HepG2 (cell line): ENCODE measurements at regions of chr17 and their contacts with region 1.

Region 1: DNA sequence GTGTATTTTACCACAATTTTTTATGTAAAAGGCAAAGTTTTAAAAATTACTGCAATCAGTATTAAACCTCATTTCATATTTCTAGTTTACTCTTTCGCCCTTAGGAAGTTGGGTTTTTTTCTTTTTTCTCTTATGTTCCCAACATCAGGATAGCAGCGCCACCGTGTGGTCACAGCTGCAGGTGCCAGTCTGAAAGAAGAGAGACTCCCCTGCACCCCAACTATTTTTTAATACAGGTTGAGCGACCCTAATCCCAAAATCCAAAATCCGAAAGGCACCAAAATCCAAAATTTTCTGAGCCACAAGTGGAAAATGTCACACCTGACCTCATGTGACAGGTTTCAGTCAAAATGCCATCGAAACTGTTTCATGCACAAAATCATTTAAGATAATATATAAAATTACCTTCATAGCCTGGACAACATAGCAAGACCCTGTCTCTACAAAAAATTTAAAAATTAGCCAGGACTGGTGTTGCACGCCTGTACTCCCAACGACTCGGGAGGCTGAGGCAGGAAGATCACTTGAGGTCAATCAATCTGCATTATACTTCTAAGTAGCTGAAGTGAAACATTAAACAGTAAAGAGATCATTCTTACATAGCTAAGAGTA is 21.8 kb upstream of the ASGR2 start:
- DNase-seq: peak; percentile 63
- ATAC-seq: no peak
- H3K4me3 ChIP-seq: peak overlapping the region; percentile 24 to 50 (median 30)
- H3K27ac ChIP-seq: peak overlapping the region; percentile 66
- H3K4me1 ChIP-seq: peaks cover 70% of the 10 kb centered on the region
- H3K27me3 ChIP-seq: no peaks in the 10 kb centered on the region
- CTCF ChIP-seq: peak; percentile 81
- EP300 ChIP-seq: no peak
- POLR2A ChIP-seq: no peak
- RAD21 ChIP-seq: peak; percentile 89

Region 2: GRCh38 chr17:6936370-6937028 is 199.9 kb before region 1 on chr17:
- CTCF ChIA-PET with region 1: no interaction called
- POLR2A ChIA-PET with region 1: no interaction called
- in situ Hi-C with region 1: no loop called
- intact Hi-C with region 1: no loop called
- DNase-seq: no peak
- ATAC-seq: no peak
- H3K4me3 ChIP-seq: no peak overlapping the region
- H3K27ac ChIP-seq: no peak overlapping the region
- H3K4me1 ChIP-seq: no peaks in the 10 kb centered on the region
- H3K27me3 ChIP-seq: no peaks in the 10 kb centered on the region
- CTCF ChIP-seq: no peak
- EP300 ChIP-seq: no peak
- POLR2A ChIP-seq: no peak
- RAD21 ChIP-seq: no peak

Region 3: GRCh38 chr17:6969323-6969726 is 167.0 kb before region 1 on chr17:
- CTCF ChIA-PET with region 1: no interaction called
- POLR2A ChIA-PET with region 1: no interaction called
- in situ Hi-C with region 1: no loop called
- intact Hi-C with region 1: no loop called
- DNase-seq: peak; percentile 12
- ATAC-seq: no peak
- H3K4me3 ChIP-seq: no peak overlapping the region
- H3K27ac ChIP-seq: no peak overlapping the region
- H3K4me1 ChIP-seq: peaks cover 8% of the 10 kb centered on the region
- H3K27me3 ChIP-seq: no peaks in the 10 kb centered on the region
- CTCF ChIP-seq: no peak
- EP300 ChIP-seq: no peak
- POLR2A ChIP-seq: no peak
- RAD21 ChIP-seq: no peak

Region 4: DNA sequence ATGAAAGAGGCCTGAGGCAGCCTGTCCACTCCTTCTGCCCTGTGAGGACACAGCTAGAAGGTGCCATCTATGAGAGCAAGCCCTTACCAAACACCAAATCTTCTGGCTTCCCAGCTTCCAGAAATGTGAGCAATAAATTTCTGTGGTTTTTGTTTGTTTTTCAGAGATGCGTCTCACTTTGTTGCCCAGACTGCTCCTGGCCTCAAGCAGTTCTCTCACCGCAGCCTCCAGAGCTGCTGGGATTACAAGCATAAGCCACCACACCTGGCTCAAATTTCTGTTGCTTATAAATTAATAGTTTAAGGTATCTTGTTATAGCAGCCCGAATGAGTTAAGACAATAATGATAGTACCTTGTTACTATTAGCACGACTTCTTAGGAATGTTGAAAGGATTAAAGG is 80.0 kb before region 1 on chr17:
- CTCF ChIA-PET with region 1: interaction called, 64 read pairs
- POLR2A ChIA-PET with region 1: interaction called, 9 read pairs
- in situ Hi-C with region 1: loop called (anchors 5 kb)
- intact Hi-C with region 1: loop called (anchors 1 kb)
- DNase-seq: no peak
- ATAC-seq: no peak
- H3K4me3 ChIP-seq: no peak overlapping the region
- H3K27ac ChIP-seq: no peak overlapping the region
- H3K4me1 ChIP-seq: peaks cover 27% of the 10 kb centered on the region
- H3K27me3 ChIP-seq: no peaks in the 10 kb centered on the region; a peak in 2 of 5 replicates
- CTCF ChIP-seq: no peak
- EP300 ChIP-seq: no peak
- POLR2A ChIP-seq: no peak
- RAD21 ChIP-seq: no peak

Region 5: GRCh38 chr17:7081341-7082062 is 54.9 kb before region 1 on chr17:
- CTCF ChIA-PET with region 1: no interaction called
- POLR2A ChIA-PET with region 1: interaction called, 4 read pairs
- in situ Hi-C with region 1: no loop called
- intact Hi-C with region 1: loop called (anchors 5 kb)
- DNase-seq: no peak
- ATAC-seq: peak; percentile 27; the same call in 1 of the 3 replicates
- H3K4me3 ChIP-seq: no peak overlapping the region
- H3K27ac ChIP-seq: no peak overlapping the region
- H3K4me1 ChIP-seq: peaks cover 14% of the 10 kb centered on the region
- H3K27me3 ChIP-seq: peaks cover 0 to 2% of the 10 kb centered on the region in 2 experiments; a peak in 3 of 5 replicates
- CTCF ChIP-seq: no peak
- EP300 ChIP-seq: no peak
- POLR2A ChIP-seq: no peak
- RAD21 ChIP-seq: no peak

Region 6: GRCh38 chr17:7167832-7168231 is 31.5 kb after region 1 on chr17:
- CTCF ChIA-PET with region 1: no interaction called
- POLR2A ChIA-PET with region 1: interaction called, 13 read pairs
- in situ Hi-C with region 1: no loop called
- intact Hi-C with region 1: no loop called
- DNase-seq: peak; percentile 56
- ATAC-seq: peak; percentile 16; the same call in 1 of the 3 replicates
- H3K4me3 ChIP-seq: no peak overlapping the region
- H3K27ac ChIP-seq: peak overlapping the region; percentile 49
- H3K4me1 ChIP-seq: peaks cover 62% of the 10 kb centered on the region
- H3K27me3 ChIP-seq: no peaks in the 10 kb centered on the region
- CTCF ChIP-seq: no peak
- EP300 ChIP-seq: no peak
- POLR2A ChIP-seq: no peak
- RAD21 ChIP-seq: no peak

Region 7: GRCh38 chr17:7234083-7234951 is 97.9 kb after region 1 on chr17 and contains the start of gene DVL2:
- CTCF ChIA-PET with region 1: no interaction called
- POLR2A ChIA-PET with region 1: no interaction called
- in situ Hi-C with region 1: no loop called
- intact Hi-C with region 1: no loop called
- DNase-seq: peak; percentile 88
- ATAC-seq: peak; percentile 62
- H3K4me3 ChIP-seq: peak within 1 kb of the TSS; percentile 66 to 93 (median 89)
- H3K27ac ChIP-seq: peak within 1 kb of the TSS; percentile 79
- H3K4me1 ChIP-seq: peaks cover 53% of the 10 kb centered on the region
- H3K27me3 ChIP-seq: no peaks in the 10 kb centered on the region; a peak in 1 of 5 replicates
- CTCF ChIP-seq: no peak; the same call in 1 of the 2 replicates
- EP300 ChIP-seq: peak in 1 of 2 experiments; percentile 56; a peak in 2 of 4 replicates
- POLR2A ChIP-seq: peak; percentile 45 to 93; a peak in 3 of 4 replicates
- RAD21 ChIP-seq: peak; percentile 75
- total RNA-seq, gene DVL2: 27.2 and 38.2 TPM in 2 replicates